HCT116 (cell line): ENCODE measurements at regions of chr9 and their contacts with region 1.

Region 1: GRCh38 chr9:95127249-95128176 is 190.0 kb downstream of the FANCC start:
- DNase-seq: peak; percentile 29
- ATAC-seq: peak; percentile 98
- H3K4me3 ChIP-seq: no peak overlapping the region
- H3K27ac ChIP-seq: no peak overlapping the region
- H3K4me1 ChIP-seq: no peaks in the 10 kb centered on the region
- H3K27me3 ChIP-seq: no peaks in the 10 kb centered on the region
- CTCF ChIP-seq: peak; percentile 97 to 99 (median 98)
- POLR2A ChIP-seq: no peak
- RAD21 ChIP-seq: peak; percentile 91

Region 2: GRCh38 chr9:94554439-94555391 is 572.8 kb before region 1 on chr9 and contains the start of gene PCAT7:
- CTCF ChIA-PET with region 1: interaction called, 7 read pairs
- POLR2A ChIA-PET with region 1: no interaction called
- RAD21 ChIA-PET with region 1: no interaction called
- intact Hi-C with region 1: loop called (anchors 10 kb)
- DNase-seq: peak; percentile 74
- ATAC-seq: peak; percentile 95
- H3K4me3 ChIP-seq: peak within 1 kb of the TSS; percentile 69 to 80
- H3K27ac ChIP-seq: peak within 1 kb of the TSS; percentile 79
- H3K4me1 ChIP-seq: peaks cover 6 to 21% of the 10 kb centered on the region in 2 experiments; a peak in 2 of 4 replicates
- H3K27me3 ChIP-seq: no peaks in the 10 kb centered on the region
- CTCF ChIP-seq: peak; percentile 65 to 84 (median 77)
- POLR2A ChIP-seq: peak; percentile 92
- RAD21 ChIP-seq: peak; percentile 77
- total RNA-seq, gene PCAT7: 3.8 TPM

Region 3: DNA sequence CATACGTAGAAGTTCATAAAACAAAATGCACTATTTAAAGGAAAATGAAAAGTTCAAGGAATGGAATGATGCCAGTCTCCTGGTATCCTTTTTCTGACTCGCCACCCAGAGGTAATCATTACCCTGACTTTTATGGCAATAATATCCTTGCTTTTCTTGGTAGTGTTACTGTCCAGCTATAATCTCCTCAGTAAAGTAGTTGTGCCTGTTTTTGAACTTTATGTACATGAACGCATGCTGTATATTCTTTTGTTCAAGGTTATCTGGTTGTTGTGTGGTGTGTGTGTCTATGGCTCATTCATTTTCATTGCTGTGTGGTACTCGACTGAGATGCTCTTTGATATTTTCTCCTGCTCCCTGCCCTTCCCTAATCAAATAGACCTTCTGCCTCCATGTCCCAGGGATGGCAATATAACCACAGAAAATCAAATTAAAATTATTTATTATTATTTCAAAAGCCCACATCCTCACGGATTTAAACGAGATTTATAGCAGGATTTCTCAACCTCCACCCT is 459.0 kb before region 1 on chr9:
- CTCF ChIA-PET with region 1: interaction called, 26 read pairs
- POLR2A ChIA-PET with region 1: interaction called, 4 read pairs
- RAD21 ChIA-PET with region 1: interaction called, 3 to 9 read pairs
- intact Hi-C with region 1: loop called (anchors 1 kb)
- DNase-seq: no peak
- ATAC-seq: peak; percentile 37
- H3K4me3 ChIP-seq: peak overlapping the region; percentile 41 to 70; a peak in 2 of 4 replicates
- H3K27ac ChIP-seq: no peak overlapping the region
- H3K4me1 ChIP-seq: peaks cover 5 to 17% of the 10 kb centered on the region in 2 experiments
- H3K27me3 ChIP-seq: no peaks in the 10 kb centered on the region
- CTCF ChIP-seq: no peak
- POLR2A ChIP-seq: no peak
- RAD21 ChIP-seq: no peak

Region 4: DNA sequence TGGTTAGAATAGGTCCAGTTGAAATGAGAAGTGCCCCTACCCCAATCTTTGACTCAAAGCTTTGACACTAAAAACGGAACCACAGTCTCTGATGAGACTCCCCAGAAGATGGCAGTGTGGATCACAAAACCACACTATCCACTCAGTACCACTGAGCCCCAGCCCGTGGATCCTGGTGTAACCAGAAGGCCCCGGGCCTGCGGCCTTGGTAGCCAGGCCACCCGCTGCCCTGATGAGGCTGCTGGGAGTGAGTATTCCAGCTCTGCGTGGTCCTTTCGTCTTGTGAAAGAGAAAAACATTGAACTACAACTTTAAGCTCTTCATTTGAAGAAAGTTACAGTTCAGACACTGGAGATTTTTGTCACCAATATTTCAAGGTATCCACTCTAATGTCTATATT is 446.0 kb before region 1 on chr9:
- CTCF ChIA-PET with region 1: interaction called, 158 read pairs
- POLR2A ChIA-PET with region 1: interaction called, 3 read pairs
- RAD21 ChIA-PET with region 1: interaction called, 9 to 14 read pairs
- intact Hi-C with region 1: loop called (anchors 1 kb)
- DNase-seq: peak; percentile 54
- ATAC-seq: peak; percentile 99
- H3K4me3 ChIP-seq: no peak overlapping the region
- H3K27ac ChIP-seq: no peak overlapping the region
- H3K4me1 ChIP-seq: no peaks in the 10 kb centered on the region
- H3K27me3 ChIP-seq: peaks cover 16% of the 10 kb centered on the region; the same call in 1 of the 2 replicates
- CTCF ChIP-seq: peak; percentile 57 to 77 (median 76)
- POLR2A ChIP-seq: no peak
- RAD21 ChIP-seq: peak; percentile 90

Region 5: GRCh38 chr9:94783102-94783664 is 344.3 kb before region 1 on chr9:
- CTCF ChIA-PET with region 1: interaction called, 20 read pairs
- POLR2A ChIA-PET with region 1: no interaction called
- RAD21 ChIA-PET with region 1: interaction called in 1 of 2 experiments, 3 read pairs
- intact Hi-C with region 1: loop called (anchors 2 kb)
- DNase-seq: peak; percentile 69
- ATAC-seq: peak; percentile 94
- H3K4me3 ChIP-seq: no peak overlapping the region
- H3K27ac ChIP-seq: no peak overlapping the region
- H3K4me1 ChIP-seq: peaks cover 6 to 10% of the 10 kb centered on the region in 2 experiments; a peak in 3 of 4 replicates
- H3K27me3 ChIP-seq: no peaks in the 10 kb centered on the region
- CTCF ChIP-seq: peak; percentile 70 to 89 (median 72)
- POLR2A ChIP-seq: no peak
- RAD21 ChIP-seq: peak; percentile 95

Region 6: DNA sequence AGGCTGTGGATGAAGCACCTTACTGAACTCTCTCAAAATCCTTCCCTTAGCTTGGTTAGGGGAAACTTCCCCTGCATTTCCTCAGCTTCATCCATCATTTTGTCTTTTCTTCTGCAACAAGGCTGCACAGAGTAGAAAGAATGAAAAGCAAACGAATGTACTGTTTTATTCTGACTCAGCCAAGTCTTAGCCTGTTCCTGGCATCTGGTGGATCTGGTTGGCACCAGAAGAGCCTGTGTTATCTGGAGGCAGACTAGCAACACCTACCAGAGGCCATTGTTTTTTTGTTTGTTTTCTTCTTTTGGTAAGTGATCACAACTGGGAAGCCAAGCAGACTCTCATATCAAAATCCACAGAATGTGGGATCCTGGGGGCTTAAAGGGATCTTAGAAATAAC is 10.7 kb before region 1 on chr9:
- CTCF ChIA-PET with region 1: interaction called, 22 read pairs
- POLR2A ChIA-PET with region 1: no interaction called
- RAD21 ChIA-PET with region 1: no interaction called
- intact Hi-C with region 1: no loop called
- DNase-seq: no peak
- ATAC-seq: no peak
- H3K4me3 ChIP-seq: no peak overlapping the region
- H3K27ac ChIP-seq: no peak overlapping the region
- H3K4me1 ChIP-seq: no peaks in the 10 kb centered on the region
- H3K27me3 ChIP-seq: no peaks in the 10 kb centered on the region
- CTCF ChIP-seq: no peak
- POLR2A ChIP-seq: no peak
- RAD21 ChIP-seq: no peak

Region 7: DNA sequence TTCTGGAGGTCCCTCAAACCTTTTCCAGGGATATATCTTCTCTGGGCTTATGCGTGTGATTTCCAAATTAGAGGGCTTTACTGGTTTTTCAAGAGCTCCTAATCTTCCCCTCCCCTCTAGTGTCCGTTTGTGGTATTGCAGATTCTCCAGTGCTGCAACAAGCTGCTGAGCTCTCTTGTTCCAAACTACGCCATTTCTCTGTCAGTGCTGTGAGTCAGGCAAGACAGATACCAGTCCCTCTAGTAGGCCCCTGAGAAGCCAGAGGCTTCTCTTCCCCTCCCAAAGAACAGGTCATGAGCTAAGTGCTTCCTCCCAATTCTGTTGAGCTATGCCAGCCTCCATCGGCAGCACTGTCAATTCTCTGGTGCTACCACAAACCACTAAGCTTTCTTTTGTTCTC is 40.5 kb after region 1 on chr9:
- CTCF ChIA-PET with region 1: interaction called, 10 read pairs
- POLR2A ChIA-PET with region 1: no interaction called
- RAD21 ChIA-PET with region 1: interaction called, 3 read pairs
- intact Hi-C with region 1: no loop called
- DNase-seq: peak; percentile 61
- ATAC-seq: peak; percentile 74
- H3K4me3 ChIP-seq: no peak overlapping the region
- H3K27ac ChIP-seq: no peak overlapping the region
- H3K4me1 ChIP-seq: no peaks in the 10 kb centered on the region
- H3K27me3 ChIP-seq: no peaks in the 10 kb centered on the region
- CTCF ChIP-seq: peak; percentile 52 to 85 (median 84)
- POLR2A ChIP-seq: no peak
- RAD21 ChIP-seq: peak; percentile 68